CD4-positive, alpha-beta T cell (primary cell): ENCODE measurements at regions of chr6 and their contacts with region 1.

Region 1: GRCh38 chr6:13641315-13641714 is 26.2 kb downstream of the NOL7 start:
- DNase-seq: no peak
- ATAC-seq: no peak
- H3K4me3 ChIP-seq: no peak overlapping the region
- H3K4me3 Mint-ChIP-seq: no peak overlapping the region
- H3K27ac ChIP-seq: no peak overlapping the region
- H3K27ac Mint-ChIP-seq: peak overlapping the region; percentile 55
- H3K4me1 ChIP-seq: no peaks in the 10 kb centered on the region
- H3K4me1 Mint-ChIP-seq: peaks cover 39% of the 10 kb centered on the region
- H3K27me3 ChIP-seq: no peaks in the 10 kb centered on the region
- H3K27me3 Mint-ChIP-seq: no peaks in the 10 kb centered on the region
- CTCF ChIP-seq: no peak

Region 2: DNA sequence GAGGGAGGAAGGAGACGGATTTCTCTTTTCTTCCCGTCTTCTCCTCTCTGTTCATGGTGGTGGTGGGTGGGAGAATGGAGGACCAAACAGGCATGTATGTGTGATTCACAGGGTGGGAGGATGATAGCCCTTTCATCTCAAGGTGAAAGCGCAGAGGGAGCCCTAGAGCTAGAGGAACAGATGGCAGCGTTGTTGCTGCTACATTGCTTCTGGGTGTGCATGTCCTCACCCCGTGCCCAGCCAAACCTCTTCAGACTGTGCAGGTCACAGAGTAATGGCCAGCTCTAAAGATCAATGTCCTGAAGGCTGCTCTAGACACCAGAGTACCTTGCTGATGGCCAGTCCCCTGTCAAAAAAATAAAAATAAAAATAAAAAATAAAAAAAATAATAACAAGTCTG is 614.8 kb before region 1 on chr6:
- CTCF ChIA-PET with region 1: no interaction called
- POLR2A ChIA-PET with region 1: no interaction called
- intact Hi-C with region 1: no loop called
- DNase-seq: no peak
- ATAC-seq: no peak
- H3K4me3 ChIP-seq: no peak overlapping the region
- H3K4me3 Mint-ChIP-seq: no peak overlapping the region
- H3K27ac ChIP-seq: no peak overlapping the region
- H3K27ac Mint-ChIP-seq: no peak overlapping the region
- H3K4me1 ChIP-seq: no peaks in the 10 kb centered on the region
- H3K4me1 Mint-ChIP-seq: no peaks in the 10 kb centered on the region
- H3K27me3 ChIP-seq: no peaks in the 10 kb centered on the region
- H3K27me3 Mint-ChIP-seq: peaks cover 4% of the 10 kb centered on the region
- CTCF ChIP-seq: no peak

Region 3: DNA sequence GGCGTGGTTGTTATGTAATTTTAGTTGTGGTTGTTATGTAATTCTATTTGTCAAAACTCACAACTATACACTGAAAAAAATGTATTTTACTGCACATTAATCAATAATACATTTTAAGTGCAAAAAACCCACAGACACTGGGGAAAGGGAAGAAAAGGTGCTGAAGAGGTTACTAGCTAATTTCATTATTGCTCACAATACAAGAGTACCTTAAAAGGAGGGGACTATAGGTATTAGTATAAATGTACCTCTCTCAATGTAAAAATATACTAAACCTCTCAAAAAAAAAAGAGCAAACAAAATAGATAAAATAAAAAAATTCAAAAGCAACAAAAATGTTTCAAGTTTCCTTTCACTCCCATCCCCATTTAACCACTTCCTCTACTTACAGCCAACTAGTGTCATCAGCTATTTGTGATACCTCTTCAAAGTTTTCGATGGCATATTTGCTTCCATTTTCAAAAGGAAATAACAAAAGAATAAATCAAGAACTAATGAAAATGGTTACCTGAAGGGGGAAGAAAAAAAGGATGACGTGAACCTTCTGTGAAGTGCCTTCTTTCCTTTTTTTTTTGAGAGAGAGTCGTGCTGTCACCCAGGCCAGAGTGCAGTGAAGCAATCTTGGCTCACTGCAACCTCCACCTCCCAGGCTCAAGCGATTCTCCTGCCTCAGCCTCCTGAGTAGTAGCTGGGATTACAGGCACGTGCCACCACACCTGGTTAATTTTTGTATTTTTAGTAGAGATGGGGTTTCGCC is 40.2 kb after region 1 on chr6:
- CTCF ChIA-PET with region 1: no interaction called
- POLR2A ChIA-PET with region 1: interaction called, 3 read pairs
- intact Hi-C with region 1: loop called in 1 of 2 experiments (anchors 5 kb)
- DNase-seq: peak in 4 of 14 experiments; percentile 18 to 82 (median 74)
- ATAC-seq: peak; percentile 81
- H3K4me3 ChIP-seq: peak overlapping the region; percentile 22
- H3K4me3 Mint-ChIP-seq: peak overlapping the region; percentile 50
- H3K27ac ChIP-seq: peak overlapping the region; percentile 21 to 62
- H3K27ac Mint-ChIP-seq: peak overlapping the region; percentile 83
- H3K4me1 ChIP-seq: peaks cover 35% of the 10 kb centered on the region
- H3K4me1 Mint-ChIP-seq: peaks cover 65% of the 10 kb centered on the region
- H3K27me3 ChIP-seq: no peaks in the 10 kb centered on the region
- H3K27me3 Mint-ChIP-seq: no peaks in the 10 kb centered on the region
- CTCF ChIP-seq: no peak

Region 4: GRCh38 chr6:14016935-14017625 is 375.8 kb after region 1 on chr6:
- CTCF ChIA-PET with region 1: no interaction called
- POLR2A ChIA-PET with region 1: no interaction called
- intact Hi-C with region 1: no loop called
- DNase-seq: no peak
- ATAC-seq: no peak
- H3K4me3 ChIP-seq: no peak overlapping the region
- H3K4me3 Mint-ChIP-seq: no peak overlapping the region
- H3K27ac ChIP-seq: no peak overlapping the region
- H3K27ac Mint-ChIP-seq: no peak overlapping the region
- H3K4me1 ChIP-seq: no peaks in the 10 kb centered on the region
- H3K4me1 Mint-ChIP-seq: no peaks in the 10 kb centered on the region
- H3K27me3 ChIP-seq: peaks cover 0 to 7% of the 10 kb centered on the region in 2 experiments
- H3K27me3 Mint-ChIP-seq: peaks cover 7% of the 10 kb centered on the region
- CTCF ChIP-seq: no peak